ENCODE measurements at regions of chr17 and their contacts with region 1.

Region 1: GRCh38 chr17:47229535-47230443 is 20.6 kb downstream of the MYL4 start:
- DNase-seq: peak; percentile 78
- CTCF ChIP-seq: peak; percentile 93

Region 2: GRCh38 chr17:47315451-47316266 is 85.9 kb after region 1 on chr17:
- in situ Hi-C with region 1: loop called (anchors 10 kb)
- DNase-seq: peak; percentile 66
- CTCF ChIP-seq: peak; percentile 86